ENCODE measurements at regions of chr11 and their contacts with region 1.

Region 1: DNA sequence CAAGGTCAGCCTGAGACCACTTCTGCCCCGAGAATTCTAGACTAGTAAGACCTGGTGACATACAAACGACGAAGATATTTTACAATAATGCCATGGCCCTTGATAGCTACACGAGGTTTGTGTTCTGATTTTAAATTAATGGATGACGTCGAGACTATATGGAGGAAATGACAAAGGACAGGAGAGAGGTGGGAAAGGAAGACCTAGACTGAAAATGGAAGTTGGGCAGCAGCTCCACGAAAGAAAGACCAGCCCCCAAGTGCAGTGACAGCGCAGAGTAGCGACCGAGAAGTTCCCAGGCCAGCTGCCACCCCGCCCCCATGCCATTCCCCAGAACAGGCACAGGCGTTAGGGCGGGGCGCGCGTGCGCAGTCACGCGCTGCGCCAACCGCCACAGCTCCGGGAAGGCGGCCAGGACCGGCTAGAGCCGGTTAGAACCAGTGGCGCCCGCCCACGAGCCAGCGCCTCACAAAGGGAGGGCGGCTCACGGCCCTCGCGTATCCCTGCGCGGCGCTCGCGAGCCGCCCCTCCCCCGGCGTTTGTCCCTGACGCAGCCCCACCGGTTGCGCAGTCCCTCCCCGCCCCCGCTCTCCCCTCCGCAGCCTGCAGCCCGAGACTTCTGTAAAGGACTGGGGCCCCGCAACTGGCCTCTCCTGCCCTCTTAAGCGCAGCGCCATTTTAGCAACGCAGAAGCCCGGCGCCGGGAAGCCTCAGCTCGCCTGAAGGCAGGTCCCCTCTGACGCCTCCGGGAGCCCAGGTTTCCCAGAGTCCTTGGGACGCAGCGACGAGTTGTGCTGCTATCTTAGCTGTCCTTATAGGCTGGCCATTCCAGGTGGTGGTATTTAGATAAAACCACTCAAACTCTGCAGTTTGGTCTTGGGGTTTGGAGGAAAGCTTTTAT is 1.5 kb upstream of the MALAT1 start:
- DNase-seq: peak; percentile 98
- ATAC-seq: peak; percentile 74
- H3K4me3 Mint-ChIP-seq: no peak overlapping the region
- H3K27ac Mint-ChIP-seq: no peak overlapping the region
- H3K4me1 Mint-ChIP-seq: peaks cover 53% of the 10 kb centered on the region
- H3K27me3 Mint-ChIP-seq: no peaks in the 10 kb centered on the region
- CTCF ChIP-seq: no peak

Region 2: GRCh38 chr11:64396079-64396591 is 1101.3 kb before region 1 on chr11:
- CTCF ChIA-PET with region 1: no interaction called
- POLR2A ChIA-PET with region 1: no interaction called
- intact Hi-C with region 1: no loop called
- DNase-seq: no peak
- ATAC-seq: no peak
- H3K4me3 Mint-ChIP-seq: no peak overlapping the region
- H3K27ac Mint-ChIP-seq: no peak overlapping the region
- H3K4me1 Mint-ChIP-seq: peaks cover 6% of the 10 kb centered on the region
- H3K27me3 Mint-ChIP-seq: peaks cover 26% of the 10 kb centered on the region
- CTCF ChIP-seq: no peak

Region 3: DNA sequence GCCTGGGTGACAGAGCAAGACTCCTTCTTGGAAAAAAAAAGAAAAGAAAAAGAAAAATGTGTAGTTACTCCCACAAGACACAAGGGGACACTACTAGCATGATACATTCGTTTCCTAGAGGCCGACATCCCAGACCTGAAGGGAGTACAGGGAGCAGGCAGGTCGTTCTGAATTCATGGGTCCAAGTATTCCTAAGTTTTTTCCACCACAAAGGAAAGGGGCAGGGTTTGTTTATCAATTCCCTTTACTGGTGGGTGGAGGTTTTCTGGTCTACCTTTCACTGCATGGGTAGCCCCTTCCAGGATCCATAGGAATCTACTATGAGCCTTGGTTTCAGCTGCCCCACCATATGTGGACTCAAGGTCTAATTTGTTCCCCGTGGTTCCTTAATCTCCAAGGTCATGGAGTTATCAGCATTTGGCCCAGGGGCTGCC is 131.0 kb before region 1 on chr11:
- CTCF ChIA-PET with region 1: interaction called, 3 read pairs
- POLR2A ChIA-PET with region 1: interaction called, 16 read pairs
- intact Hi-C with region 1: no loop called
- DNase-seq: no peak
- ATAC-seq: peak; percentile 72
- H3K4me3 Mint-ChIP-seq: no peak overlapping the region
- H3K27ac Mint-ChIP-seq: no peak overlapping the region
- H3K4me1 Mint-ChIP-seq: peaks cover 25% of the 10 kb centered on the region
- H3K27me3 Mint-ChIP-seq: no peaks in the 10 kb centered on the region
- CTCF ChIP-seq: peak; percentile 60

Region 4: DNA sequence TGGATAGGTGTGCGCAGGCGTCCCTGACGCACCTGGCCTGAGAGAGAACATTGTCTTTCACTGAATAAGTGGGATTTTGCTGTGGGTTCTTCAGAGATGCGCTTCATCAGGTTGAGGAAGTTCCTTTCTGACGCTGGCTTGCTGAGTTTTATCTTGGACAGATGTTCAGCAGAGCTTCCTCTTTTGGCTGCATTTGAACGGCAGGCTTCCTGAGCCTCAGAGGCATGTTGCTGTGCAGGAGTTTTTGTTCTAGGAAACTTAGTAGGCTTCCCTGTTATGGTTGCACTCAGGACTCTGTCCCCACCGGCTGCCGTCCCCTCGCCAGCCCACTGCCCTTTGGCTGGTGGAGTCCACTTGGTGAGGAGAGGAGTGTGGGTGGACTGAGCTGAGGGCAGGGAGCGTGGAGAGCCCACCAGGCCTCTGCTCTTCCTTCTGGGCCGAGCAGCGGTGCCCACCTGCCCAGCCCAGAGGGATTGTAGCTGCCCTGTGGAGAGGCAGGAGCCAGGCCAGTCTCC is 93.7 kb before region 1 on chr11:
- CTCF ChIA-PET with region 1: no interaction called
- POLR2A ChIA-PET with region 1: interaction called, 328 read pairs
- intact Hi-C with region 1: no loop called
- DNase-seq: peak; percentile 46
- ATAC-seq: peak; percentile 73
- H3K4me3 Mint-ChIP-seq: peak overlapping the region; percentile 75
- H3K27ac Mint-ChIP-seq: peak overlapping the region; percentile 96
- H3K4me1 Mint-ChIP-seq: peaks cover 49% of the 10 kb centered on the region
- H3K27me3 Mint-ChIP-seq: no peaks in the 10 kb centered on the region
- CTCF ChIP-seq: no peak

Region 5: GRCh38 chr11:65432686-65433582 is 64.5 kb before region 1 on chr11:
- CTCF ChIA-PET with region 1: interaction called, 4 read pairs
- POLR2A ChIA-PET with region 1: interaction called, 3,752 read pairs
- intact Hi-C with region 1: no loop called
- DNase-seq: no peak
- ATAC-seq: peak; percentile 30
- H3K4me3 Mint-ChIP-seq: no peak overlapping the region
- H3K27ac Mint-ChIP-seq: peak overlapping the region; percentile 73
- H3K4me1 Mint-ChIP-seq: peaks cover 64% of the 10 kb centered on the region
- H3K27me3 Mint-ChIP-seq: no peaks in the 10 kb centered on the region
- CTCF ChIP-seq: no peak

Region 6: GRCh38 chr11:65471410-65471762 is 26.0 kb before region 1 on chr11:
- CTCF ChIA-PET with region 1: interaction called, 18 read pairs
- POLR2A ChIA-PET with region 1: interaction called, 1,949 read pairs
- intact Hi-C with region 1: loop called (anchors 1 kb)
- DNase-seq: no peak
- ATAC-seq: no peak
- H3K4me3 Mint-ChIP-seq: peak overlapping the region; percentile 66
- H3K27ac Mint-ChIP-seq: peak overlapping the region; percentile 91
- H3K4me1 Mint-ChIP-seq: peaks cover 36% of the 10 kb centered on the region
- H3K27me3 Mint-ChIP-seq: no peaks in the 10 kb centered on the region
- CTCF ChIP-seq: no peak

Region 7: DNA sequence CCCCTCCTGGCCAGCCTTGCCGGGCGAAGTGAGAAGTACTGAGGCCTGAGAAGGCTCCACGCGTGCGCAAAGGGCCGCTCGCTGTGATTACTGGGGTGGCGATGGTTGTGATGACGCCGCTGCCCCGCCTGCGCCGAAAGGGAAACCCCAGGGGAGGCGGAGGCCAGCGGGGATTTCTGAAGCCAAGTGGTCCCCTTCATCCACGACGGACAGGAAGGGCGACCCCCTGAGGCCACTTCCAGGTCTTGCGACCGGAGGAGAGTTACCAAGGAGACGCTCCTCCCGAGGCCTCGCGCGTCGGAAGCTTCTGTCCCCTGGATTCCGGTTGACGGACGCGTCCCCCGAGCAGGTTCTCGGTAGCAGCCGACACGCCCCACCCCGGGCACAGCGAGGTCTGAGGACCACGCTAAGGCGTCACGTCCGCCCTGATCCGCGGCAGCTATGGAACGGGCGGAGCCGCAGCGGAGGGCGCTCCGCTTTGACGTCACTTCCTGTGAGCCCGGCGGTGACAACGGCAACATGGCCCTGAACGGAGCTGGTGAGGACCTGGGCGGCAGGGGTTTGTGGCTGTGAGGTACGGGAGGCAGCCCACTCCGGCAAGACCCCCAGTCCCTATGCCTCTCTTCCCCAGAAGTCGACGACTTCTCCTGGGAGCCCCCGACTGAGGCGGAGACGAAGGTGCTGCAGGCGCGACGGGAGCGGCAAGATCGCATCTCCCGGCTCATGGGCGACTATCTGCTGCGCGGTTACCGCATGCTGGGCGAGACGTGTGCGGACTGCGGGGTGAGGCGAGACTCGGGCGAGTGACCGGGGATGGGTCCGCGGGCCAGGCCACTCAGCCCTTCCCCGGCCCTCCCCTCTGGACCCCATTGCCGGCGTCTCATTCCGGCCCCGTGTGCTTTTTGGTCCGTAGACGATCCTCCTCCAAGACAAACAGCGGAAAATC is 72.9 kb after region 1 on chr11 and contains the start of gene ZNRD2:
- CTCF ChIA-PET with region 1: interaction called, 3 read pairs
- POLR2A ChIA-PET with region 1: interaction called, 22 read pairs
- intact Hi-C with region 1: no loop called
- DNase-seq: peak; percentile 93
- ATAC-seq: peak; percentile 68
- H3K4me3 Mint-ChIP-seq: peak within 1 kb of the TSS; percentile 99
- H3K27ac Mint-ChIP-seq: peak within 1 kb of the TSS; percentile 99
- H3K4me1 Mint-ChIP-seq: peaks cover 78% of the 10 kb centered on the region
- H3K27me3 Mint-ChIP-seq: no peaks in the 10 kb centered on the region
- CTCF ChIP-seq: no peak
- total RNA-seq, gene ZNRD2: 40.9 and 41.0 TPM in 2 replicates

Region 8: GRCh38 chr11:65720237-65720934 is 223.0 kb after region 1 on chr11 and contains the start of gene RNASEH2C:
- CTCF ChIA-PET with region 1: no interaction called
- POLR2A ChIA-PET with region 1: no interaction called
- intact Hi-C with region 1: no loop called
- DNase-seq: peak; percentile 75
- ATAC-seq: peak; percentile 92
- H3K4me3 Mint-ChIP-seq: peak within 1 kb of the TSS; percentile 94
- H3K27ac Mint-ChIP-seq: peak within 1 kb of the TSS; percentile 83
- H3K4me1 Mint-ChIP-seq: peaks cover 29% of the 10 kb centered on the region
- H3K27me3 Mint-ChIP-seq: no peaks in the 10 kb centered on the region
- CTCF ChIP-seq: no peak
- total RNA-seq, gene RNASEH2C: 85.3 and 91.4 TPM in 2 replicates

Measured in activated B cell treated with CpG ODN at 0.5 μM for 24 hours (primary cell).